Sigmoid colon (tissue), 7 donors: ENCODE measurements at regions of chr11 and their contacts with region 1.

Region 1: GRCh38 chr11:65027213-65028067 is at the start of gene SNX15:
- DNase-seq: peak; percentile 97
- H3K4me3 ChIP-seq: peak within 1 kb of the TSS; percentile 57 to 68 (median 62)
- H3K27ac ChIP-seq: peak within 1 kb of the TSS; percentile 86 to 95 (median 90)
- H3K4me1 ChIP-seq: peaks cover 0 to 21% (median 16%) of the 10 kb centered on the region in 4 donors
- H3K27me3 ChIP-seq: no peaks in the 10 kb centered on the region
- CTCF ChIP-seq: peak in 3 of 4 experiments; percentile 64 to 78 (median 73)
- EP300 ChIP-seq: no peak
- POLR2A ChIP-seq: peak; percentile 63 to 76
- total RNA-seq, gene SNX15: 20.1 to 36.6 (median 25.2) TPM

Region 2: DNA sequence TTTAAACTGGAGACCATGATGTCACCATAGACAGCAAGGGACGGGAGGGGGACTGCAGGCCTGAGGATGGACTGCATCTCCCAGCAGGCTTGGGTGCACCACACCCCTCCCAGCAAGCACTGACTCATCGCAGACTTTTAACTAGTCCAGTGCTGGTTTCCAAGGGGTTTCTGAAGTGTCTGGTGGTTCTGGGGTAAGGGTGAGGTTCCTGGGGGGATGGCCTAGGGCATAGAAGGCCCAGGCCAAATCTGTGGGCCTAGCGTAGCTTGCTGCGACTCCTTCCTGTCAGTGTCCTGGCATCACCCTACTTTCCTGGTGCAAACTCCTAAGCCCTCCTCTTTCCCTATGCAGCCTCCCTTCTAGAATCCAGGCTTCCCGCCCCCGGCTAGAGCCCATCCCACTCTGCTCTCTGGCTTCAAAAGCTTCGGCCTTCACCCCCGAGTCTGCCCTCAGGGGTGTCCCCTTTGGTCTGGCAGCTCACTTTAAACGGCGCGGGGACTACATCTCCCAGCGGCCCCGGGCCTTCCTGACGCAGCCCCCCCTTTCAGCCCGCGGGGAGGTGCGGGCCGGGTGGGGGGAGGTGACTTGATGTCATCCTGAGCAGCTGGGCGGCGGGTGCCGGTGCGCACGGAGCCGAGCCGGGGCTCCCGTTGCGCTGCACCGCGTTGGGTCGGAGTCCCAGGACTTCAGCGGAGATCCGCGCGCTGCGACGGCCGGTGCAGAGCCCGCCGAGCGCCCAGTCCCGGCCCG is 103.2 kb before region 1 on chr11 and contains the start of gene PPP2R5B:
- intact Hi-C with region 1: loop called (anchors 1 kb)
- DNase-seq: peak; percentile 98
- H3K4me3 ChIP-seq: peak within 1 kb of the TSS; percentile 64 to 93 (median 84)
- H3K27ac ChIP-seq: peak within 1 kb of the TSS; percentile 89 to 97 (median 94)
- H3K4me1 ChIP-seq: peaks cover 0 to 23% (median 22%) of the 10 kb centered on the region in 4 donors
- H3K27me3 ChIP-seq: no peaks in the 10 kb centered on the region
- CTCF ChIP-seq: no peak
- EP300 ChIP-seq: peak in 1 of 4 donors; percentile 49
- POLR2A ChIP-seq: peak; percentile 67 to 81
- total RNA-seq, gene PPP2R5B: 17.8 to 27.3 (median 21.3) TPM

Region 3: GRCh38 chr11:65013692-65014145 is 13.7 kb before region 1 on chr11:
- intact Hi-C with region 1: loop called (anchors 1 kb)
- DNase-seq: peak; percentile 96
- H3K4me3 ChIP-seq: peak overlapping the region; percentile 60 to 92 (median 81)
- H3K27ac ChIP-seq: peak overlapping the region; percentile 99 to 100 (median 100)
- H3K4me1 ChIP-seq: peaks cover 0 to 25% (median 19%) of the 10 kb centered on the region in 4 donors
- H3K27me3 ChIP-seq: no peaks in the 10 kb centered on the region
- CTCF ChIP-seq: peak in 3 of 4 experiments; percentile 30 to 94 (median 82)
- EP300 ChIP-seq: no peak
- POLR2A ChIP-seq: peak; percentile 40 to 53

Region 4: GRCh38 chr11:65040847-65041621 is 13.6 kb after region 1 on chr11 and contains the start of gene SAC3D1:
- intact Hi-C with region 1: loop called (anchors 1 kb)
- DNase-seq: peak; percentile 94
- H3K4me3 ChIP-seq: peak within 1 kb of the TSS; percentile 50 to 76 (median 65)
- H3K27ac ChIP-seq: peak within 1 kb of the TSS; percentile 83 to 93 (median 91)
- H3K4me1 ChIP-seq: peaks cover 0 to 22% (median 17%) of the 10 kb centered on the region in 4 donors
- H3K27me3 ChIP-seq: no peaks in the 10 kb centered on the region
- CTCF ChIP-seq: no peak
- EP300 ChIP-seq: no peak
- POLR2A ChIP-seq: no peak
- total RNA-seq, gene SAC3D1: 9.1 to 17.8 (median 14.1) TPM

Region 5: GRCh38 chr11:65083834-65084597 is 56.6 kb after region 1 on chr11 and contains the starts of genes CDCA5 and ZFPL1:
- intact Hi-C with region 1: loop called (anchors 5 kb)
- DNase-seq: peak; percentile 97
- H3K4me3 ChIP-seq: peak within 1 kb of the TSS; percentile 78 to 84 (median 82)
- H3K27ac ChIP-seq: peak within 1 kb of the TSS; percentile 88 to 95 (median 92)
- H3K4me1 ChIP-seq: peaks cover 0 to 23% (median 20%) of the 10 kb centered on the region in 4 donors
- H3K27me3 ChIP-seq: no peaks in the 10 kb centered on the region
- CTCF ChIP-seq: no peak
- EP300 ChIP-seq: peak in 2 of 4 donors; percentile 33 to 82
- POLR2A ChIP-seq: peak in 1 of 2 donors; percentile 48
- total RNA-seq, gene CDCA5: 0.33 to 7.5 (median 3.3) TPM in 3 of 4 donors, not detected in the other
- total RNA-seq, gene ZFPL1: 26.1 to 38.8 (median 36.9) TPM

Region 6: DNA sequence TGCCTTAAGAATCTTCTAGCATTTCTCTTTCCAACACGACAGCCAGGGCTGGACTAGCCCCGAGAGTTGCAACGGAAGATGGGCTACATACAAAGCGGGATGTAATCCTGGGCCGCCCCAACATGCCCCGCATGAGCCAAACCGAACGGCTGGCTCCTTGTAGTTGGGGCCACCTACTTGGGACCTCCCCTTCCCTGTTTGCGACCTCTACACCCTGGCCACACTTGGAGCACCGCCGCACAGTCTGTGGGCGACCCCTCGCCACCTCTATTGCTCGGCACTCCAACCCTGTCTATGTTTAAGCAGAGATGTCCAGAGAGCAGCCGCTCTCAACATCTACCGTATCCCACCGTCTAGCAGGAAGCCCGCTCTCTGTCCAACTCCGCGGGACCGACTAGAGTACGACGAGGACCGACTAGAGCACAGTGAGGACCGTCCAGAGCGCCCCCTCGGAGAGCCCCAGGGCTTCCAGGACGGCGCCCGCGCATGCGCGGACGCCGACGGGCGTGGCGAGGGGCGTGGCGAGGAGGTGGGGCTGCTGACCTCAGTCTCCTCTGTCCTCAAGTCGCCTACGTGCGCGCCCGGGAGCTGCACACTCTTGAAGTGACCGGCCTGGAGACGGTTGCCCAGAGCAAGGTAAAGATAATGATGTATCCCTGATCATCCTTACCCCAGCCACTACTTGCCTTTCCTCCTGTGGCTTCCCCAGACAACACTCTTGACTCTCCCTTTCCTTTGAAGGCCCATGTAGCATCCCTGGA is 427.4 kb after region 1 on chr11:
- intact Hi-C with region 1: no loop called
- DNase-seq: peak; percentile 97
- H3K4me3 ChIP-seq: peak overlapping the region; percentile 33 to 58 (median 50)
- H3K27ac ChIP-seq: peak overlapping the region; percentile 82 to 90 (median 88)
- H3K4me1 ChIP-seq: peaks cover 0 to 19% (median 11%) of the 10 kb centered on the region in 4 donors
- H3K27me3 ChIP-seq: no peaks in the 10 kb centered on the region
- CTCF ChIP-seq: no peak
- EP300 ChIP-seq: no peak
- POLR2A ChIP-seq: peak; percentile 65 to 71